ENCODE measurements at regions of chr2 and their contacts with region 1.

Region 1: DNA sequence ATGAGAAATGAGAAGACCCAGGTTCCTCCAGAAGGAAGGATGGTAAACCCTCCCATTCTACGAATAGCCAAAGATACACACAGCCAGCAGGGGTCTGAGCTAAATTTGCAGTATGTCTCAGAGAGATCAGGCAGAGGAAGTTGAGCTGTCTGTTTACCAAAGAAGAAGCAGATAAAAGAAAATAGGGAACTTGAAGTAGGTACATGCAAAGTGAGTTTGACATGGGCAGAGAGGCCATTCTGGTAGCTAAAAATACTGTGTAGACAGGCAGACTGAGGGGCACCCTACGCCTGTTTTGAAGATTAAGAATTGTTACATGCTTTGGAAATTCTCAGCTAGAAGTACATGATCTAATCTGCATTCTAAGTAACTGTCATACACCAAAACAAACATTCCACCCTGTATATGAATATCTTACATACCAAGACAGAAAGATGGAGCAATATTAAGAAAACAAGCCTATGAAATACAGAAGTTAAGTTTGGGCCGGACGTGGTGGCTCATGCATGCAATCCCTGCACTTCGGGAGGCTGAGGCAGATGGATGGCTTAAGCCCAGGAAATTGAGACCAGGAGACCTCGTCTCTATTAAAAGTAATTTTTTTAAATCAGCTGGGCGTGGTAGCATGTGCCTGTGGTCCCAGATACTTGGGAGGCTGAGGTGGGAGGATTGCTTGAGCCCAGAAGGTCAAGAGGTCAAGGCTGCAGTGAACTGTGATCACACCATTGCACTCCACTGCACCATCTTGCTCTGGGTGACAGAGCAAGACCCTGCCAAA is 157.9 kb downstream of the ANKRD44 start:
- DNase-seq: peak; percentile 94
- H3K4me3 ChIP-seq: peak overlapping the region; percentile 56
- H3K27ac ChIP-seq: peak overlapping the region; percentile 99
- H3K4me1 ChIP-seq: peaks cover 81% of the 10 kb centered on the region
- CTCF ChIP-seq: peak; percentile 64

Region 2: GRCh38 chr2:197137231-197137630 is 15.4 kb before region 1 on chr2:
- CTCF ChIA-PET with region 1: interaction called, 3 read pairs
- POLR2A ChIA-PET with region 1: interaction called, 13 read pairs
- intact Hi-C with region 1: no loop called
- DNase-seq: no peak
- H3K4me3 ChIP-seq: no peak overlapping the region
- H3K27ac ChIP-seq: no peak overlapping the region
- H3K4me1 ChIP-seq: peaks cover 63% of the 10 kb centered on the region
- CTCF ChIP-seq: no peak

Measured in OCI-LY7 (cell line).